Endothelial cell of umbilical vein (primary cell): ENCODE measurements at regions of chr2 and their contacts with region 1.

Region 1: GRCh38 chr2:64779117-64779690 is 125.5 kb upstream of the SERTAD2 start:
- DNase-seq: peak; percentile 88
- H3K4me3 ChIP-seq: no peak overlapping the region
- H3K27ac ChIP-seq: peak overlapping the region; percentile 85
- H3K4me1 ChIP-seq: peaks cover 29% of the 10 kb centered on the region
- H3K27me3 ChIP-seq: no peaks in the 10 kb centered on the region
- CTCF ChIP-seq: no peak
- POLR2A ChIP-seq: no peak

Region 2: DNA sequence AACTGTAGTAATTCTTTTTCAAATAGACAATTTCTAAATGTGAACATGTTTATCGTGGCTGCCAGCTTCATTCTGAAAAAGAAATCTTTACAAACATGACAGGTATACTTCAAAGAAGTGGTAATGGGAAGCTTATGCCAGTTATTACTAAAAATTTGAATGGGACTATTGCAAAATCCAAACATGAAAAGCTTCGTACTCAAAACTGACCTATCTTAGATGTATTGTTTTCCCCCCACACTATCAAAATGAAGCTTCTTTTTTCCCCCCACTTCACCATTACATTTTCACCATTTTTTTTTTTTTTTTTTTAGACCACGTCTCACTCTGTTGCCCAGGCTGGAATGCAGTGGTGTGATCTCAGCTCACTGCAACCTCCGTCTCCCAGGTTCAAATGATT is 75.0 kb before region 1 on chr2:
- CTCF ChIA-PET with region 1: no interaction called
- POLR2A ChIA-PET with region 1: no interaction called
- dilution Hi-C with region 1: no loop called
- intact Hi-C with region 1: no loop called
- DNase-seq: no peak
- H3K4me3 ChIP-seq: no peak overlapping the region
- H3K27ac ChIP-seq: no peak overlapping the region
- H3K4me1 ChIP-seq: peaks cover 3% of the 10 kb centered on the region
- H3K27me3 ChIP-seq: no peaks in the 10 kb centered on the region
- CTCF ChIP-seq: no peak
- POLR2A ChIP-seq: no peak

Region 3: DNA sequence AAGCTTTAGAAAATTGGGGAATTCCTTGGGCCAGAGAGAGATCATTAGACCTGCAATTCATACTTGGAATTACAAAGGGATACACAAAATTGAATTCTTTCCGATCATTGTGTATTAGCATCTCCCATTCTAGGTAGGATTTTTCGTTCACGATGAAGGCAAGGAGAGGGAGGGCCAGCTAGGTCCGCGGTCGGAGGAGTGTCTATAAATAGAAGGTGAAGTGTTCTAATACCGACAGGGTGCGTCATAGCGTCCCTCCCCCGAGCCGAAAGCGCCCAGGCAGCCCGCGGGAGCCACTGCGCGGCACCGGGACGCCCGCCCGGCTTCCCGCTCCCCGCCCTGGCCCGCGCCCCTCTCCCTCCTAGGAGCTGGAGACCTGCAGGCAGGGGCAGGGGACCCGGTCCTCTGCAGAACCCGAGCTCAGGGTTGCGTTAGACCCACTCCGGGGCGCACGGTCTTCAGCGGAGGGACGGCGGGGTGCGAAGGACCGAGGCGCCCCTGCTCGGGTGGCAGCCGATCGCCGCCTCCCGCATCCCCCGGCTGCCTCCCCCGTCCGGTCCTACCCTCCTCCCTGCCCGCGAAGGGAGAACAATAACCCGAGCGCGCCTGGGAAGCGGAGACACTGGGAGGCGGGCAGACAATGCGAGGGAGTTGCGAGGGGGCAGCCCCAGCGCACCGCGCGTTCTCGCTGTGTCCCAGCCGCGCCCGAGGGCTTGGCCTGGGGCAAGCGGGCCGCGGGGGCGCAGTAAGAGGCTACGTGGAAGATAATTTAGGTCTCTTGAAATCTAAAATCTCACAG is 11.3 kb before region 1 on chr2:
- CTCF ChIA-PET with region 1: interaction called, 6 read pairs
- POLR2A ChIA-PET with region 1: interaction called, 9 read pairs
- dilution Hi-C with region 1: no loop called
- intact Hi-C with region 1: loop called (anchors 1 kb)
- DNase-seq: peak; percentile 87
- H3K4me3 ChIP-seq: peak overlapping the region; percentile 57 to 80 (median 75)
- H3K27ac ChIP-seq: peak overlapping the region; percentile 87
- H3K4me1 ChIP-seq: peaks cover 12% of the 10 kb centered on the region
- H3K27me3 ChIP-seq: no peaks in the 10 kb centered on the region
- CTCF ChIP-seq: no peak
- POLR2A ChIP-seq: peak; percentile 76

Region 4: DNA sequence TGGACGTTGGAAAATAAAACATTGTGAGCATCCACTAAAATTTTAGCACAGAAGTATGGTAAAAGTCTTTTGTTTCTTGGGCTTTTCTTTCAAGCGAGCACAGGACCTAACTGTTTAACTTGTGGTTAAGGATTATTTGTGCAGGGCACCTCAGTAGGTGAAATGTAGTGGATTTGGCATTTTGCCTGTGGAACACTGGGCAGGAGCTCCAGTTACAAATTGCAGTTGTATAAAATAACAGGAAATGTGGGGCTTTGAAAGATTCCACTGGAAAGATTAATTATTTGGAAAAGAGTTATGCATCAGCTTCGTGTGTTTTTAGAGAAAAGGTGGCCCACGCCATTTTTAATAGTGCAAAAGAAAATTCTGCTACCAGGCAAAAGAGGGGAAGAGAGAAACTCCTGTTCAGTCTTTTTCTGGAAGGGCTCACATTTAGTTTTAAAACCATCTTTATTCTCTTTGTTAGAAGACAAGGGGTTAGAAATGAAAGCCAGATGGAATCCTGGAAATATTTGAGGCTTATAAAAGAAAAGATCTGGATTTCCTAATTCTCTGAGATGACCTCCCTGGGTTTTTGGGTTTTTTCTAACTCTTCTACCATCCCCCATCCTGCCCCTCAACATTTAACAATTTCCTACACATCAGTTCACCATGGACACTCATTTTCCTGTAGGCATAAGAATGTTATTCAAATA is 18.8 kb after region 1 on chr2:
- CTCF ChIA-PET with region 1: interaction called, 56 read pairs
- POLR2A ChIA-PET with region 1: interaction called, 9 read pairs
- dilution Hi-C with region 1: no loop called
- intact Hi-C with region 1: loop called (anchors 1 kb)
- DNase-seq: peak; percentile 77
- H3K4me3 ChIP-seq: no peak overlapping the region
- H3K27ac ChIP-seq: peak overlapping the region; percentile 30
- H3K4me1 ChIP-seq: peaks cover 65% of the 10 kb centered on the region
- H3K27me3 ChIP-seq: no peaks in the 10 kb centered on the region
- CTCF ChIP-seq: no peak
- POLR2A ChIP-seq: no peak

Region 5: GRCh38 chr2:64807417-64807816 is 28.2 kb after region 1 on chr2:
- CTCF ChIA-PET with region 1: no interaction called
- POLR2A ChIA-PET with region 1: no interaction called
- dilution Hi-C with region 1: no loop called
- intact Hi-C with region 1: loop called (anchors 1 kb)
- DNase-seq: peak; percentile 89
- H3K4me3 ChIP-seq: no peak overlapping the region
- H3K27ac ChIP-seq: no peak overlapping the region
- H3K4me1 ChIP-seq: peaks cover 15% of the 10 kb centered on the region
- H3K27me3 ChIP-seq: no peaks in the 10 kb centered on the region
- CTCF ChIP-seq: peak in 1 of 2 donors; percentile 1
- POLR2A ChIP-seq: no peak

Region 6: GRCh38 chr2:65402780-65403528 is 623.8 kb after region 1 on chr2:
- CTCF ChIA-PET with region 1: no interaction called
- POLR2A ChIA-PET with region 1: no interaction called
- dilution Hi-C with region 1: no loop called
- intact Hi-C with region 1: no loop called
- DNase-seq: no peak
- H3K4me3 ChIP-seq: no peak overlapping the region
- H3K27ac ChIP-seq: no peak overlapping the region
- H3K4me1 ChIP-seq: no peaks in the 10 kb centered on the region
- H3K27me3 ChIP-seq: peaks cover 19 to 21% of the 10 kb centered on the region in 2 experiments
- CTCF ChIP-seq: no peak
- POLR2A ChIP-seq: no peak